CD14-positive monocyte (primary cell): ENCODE measurements at regions of chr3 and their contacts with region 1.

Region 1: GRCh38 chr3:57597122-57597923 is at the start of gene ARF4:
- DNase-seq: peak; percentile 98 to 100 (median 100)
- H3K4me3 ChIP-seq: peak within 1 kb of the TSS; percentile 79 to 97 (median 87)
- H3K4me3 Mint-ChIP-seq: peak within 1 kb of the TSS; percentile 99
- H3K27ac ChIP-seq: peak within 1 kb of the TSS; percentile 99
- H3K27ac Mint-ChIP-seq: peak within 1 kb of the TSS; percentile 99 to 100 (median 100)
- H3K4me1 ChIP-seq: peaks cover 20 to 31% of the 10 kb centered on the region in 2 donors
- H3K4me1 Mint-ChIP-seq: peaks cover 37% of the 10 kb centered on the region
- H3K27me3 ChIP-seq: no peaks in the 10 kb centered on the region
- H3K27me3 Mint-ChIP-seq: no peaks in the 10 kb centered on the region
- CTCF ChIP-seq: peak; percentile 28
- polyA plus RNA-seq, gene ARF4: 60.2 to 229 (median 224) TPM

Region 2: GRCh38 chr3:57530071-57530608 is 67.2 kb before region 1 on chr3:
- intact Hi-C with region 1: no loop called
- DNase-seq: no peak
- H3K4me3 ChIP-seq: no peak overlapping the region
- H3K4me3 Mint-ChIP-seq: no peak overlapping the region
- H3K27ac ChIP-seq: no peak overlapping the region
- H3K27ac Mint-ChIP-seq: no peak overlapping the region
- H3K4me1 ChIP-seq: no peaks in the 10 kb centered on the region
- H3K4me1 Mint-ChIP-seq: no peaks in the 10 kb centered on the region
- H3K27me3 ChIP-seq: no peaks in the 10 kb centered on the region
- H3K27me3 Mint-ChIP-seq: peaks cover 1 to 2% (median 2%) of the 10 kb centered on the region in 3 donors
- CTCF ChIP-seq: no peak

Region 3: DNA sequence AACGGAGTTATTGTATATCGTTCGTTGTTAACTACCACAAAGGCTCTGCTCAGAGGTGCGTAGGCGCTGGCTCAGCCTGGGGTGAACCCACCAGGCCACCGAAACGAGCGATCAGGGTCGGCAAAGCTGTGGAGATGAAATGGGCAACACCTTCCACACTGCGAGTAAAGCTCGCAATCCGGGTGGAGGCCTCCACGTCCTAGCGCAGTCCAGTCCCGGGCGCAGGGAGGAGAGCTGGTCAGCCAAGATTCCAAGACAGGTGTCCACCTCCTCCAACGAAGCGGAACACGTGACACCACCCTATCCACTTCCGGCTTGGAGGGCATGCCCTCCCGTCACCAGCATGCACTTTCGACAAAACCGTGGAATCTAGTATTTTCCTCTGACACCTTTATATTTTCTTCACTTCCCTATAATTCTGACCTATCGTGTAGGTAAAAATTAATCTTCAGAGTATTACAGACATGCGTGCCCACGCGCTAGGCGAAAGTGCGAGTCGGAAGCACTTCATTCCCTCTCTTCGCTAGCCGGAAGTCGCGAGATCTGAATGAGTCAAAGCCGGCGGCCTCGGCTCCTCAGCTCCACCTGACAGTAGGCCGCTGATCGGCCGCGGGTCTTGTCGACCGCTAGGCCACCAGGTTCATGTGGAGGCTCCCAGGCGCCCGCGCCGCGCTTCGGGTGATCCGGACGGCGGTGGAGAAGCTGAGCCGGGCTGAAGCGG is 41.4 kb before region 1 on chr3 and contains the start of gene PDE12:
- intact Hi-C with region 1: loop called (anchors 2 to 5 kb)
- DNase-seq: peak; percentile 89 to 91 (median 91)
- H3K4me3 ChIP-seq: peak within 1 kb of the TSS; percentile 73 to 94 (median 86)
- H3K4me3 Mint-ChIP-seq: peak within 1 kb of the TSS; percentile 97 to 99
- H3K27ac ChIP-seq: peak within 1 kb of the TSS; percentile 94 to 96
- H3K27ac Mint-ChIP-seq: peak within 1 kb of the TSS; percentile 96 to 100 (median 99)
- H3K4me1 ChIP-seq: peaks cover 25 to 27% of the 10 kb centered on the region in 2 donors
- H3K4me1 Mint-ChIP-seq: peaks cover 32% of the 10 kb centered on the region
- H3K27me3 ChIP-seq: no peaks in the 10 kb centered on the region
- H3K27me3 Mint-ChIP-seq: peaks cover 0 to 1% (median 0%) of the 10 kb centered on the region in 3 donors
- CTCF ChIP-seq: no peak
- polyA plus RNA-seq, gene PDE12: 5.1 to 11.3 (median 11.0) TPM

Region 4: GRCh38 chr3:57659806-57660439 is 62.6 kb after region 1 on chr3:
- intact Hi-C with region 1: loop called in 1 of 2 experiments (anchors 10 kb)
- DNase-seq: peak in 1 of 3 donors; percentile 23
- H3K4me3 ChIP-seq: no peak overlapping the region
- H3K4me3 Mint-ChIP-seq: no peak overlapping the region
- H3K27ac ChIP-seq: peak overlapping the region in 1 of 2 donors; percentile 12
- H3K27ac Mint-ChIP-seq: no peak overlapping the region
- H3K4me1 ChIP-seq: peaks cover 0 to 9% of the 10 kb centered on the region in 2 donors
- H3K4me1 Mint-ChIP-seq: peaks cover 6% of the 10 kb centered on the region
- H3K27me3 ChIP-seq: no peaks in the 10 kb centered on the region
- H3K27me3 Mint-ChIP-seq: no peaks in the 10 kb centered on the region
- CTCF ChIP-seq: no peak

Region 5: GRCh38 chr3:57692259-57693147 is 95.2 kb after region 1 on chr3 and contains the start of gene DENND6A:
- intact Hi-C with region 1: loop called (anchors 2 to 10 kb)
- DNase-seq: peak; percentile 86 to 96 (median 88)
- H3K4me3 ChIP-seq: peak within 1 kb of the TSS; percentile 59 to 90 (median 87)
- H3K4me3 Mint-ChIP-seq: peak within 1 kb of the TSS; percentile 88 to 90
- H3K27ac ChIP-seq: peak within 1 kb of the TSS; percentile 89 to 91
- H3K27ac Mint-ChIP-seq: peak within 1 kb of the TSS; percentile 92 to 99 (median 97)
- H3K4me1 ChIP-seq: peaks cover 22 to 45% of the 10 kb centered on the region in 2 donors
- H3K4me1 Mint-ChIP-seq: peaks cover 31% of the 10 kb centered on the region
- H3K27me3 ChIP-seq: no peaks in the 10 kb centered on the region
- H3K27me3 Mint-ChIP-seq: no peaks in the 10 kb centered on the region
- CTCF ChIP-seq: no peak
- polyA plus RNA-seq, gene DENND6A: 10.8 to 20.8 (median 15.4) TPM